GM10248 (cell line): ENCODE measurements at regions of chr1 and their contacts with region 1.

Region 1: GRCh38 chr1:37514350-37515184 is at the start of gene MEAF6:
- DNase-seq: peak; percentile 94
- CTCF ChIP-seq: peak; percentile 64

Region 2: GRCh38 chr1:37474046-37474759 is 40.4 kb before region 1 on chr1 and contains the start of gene ZC3H12A:
- CTCF ChIA-PET with region 1: interaction called, 23 read pairs
- POLR2A ChIA-PET with region 1: interaction called, 11 read pairs
- DNase-seq: peak; percentile 99
- CTCF ChIP-seq: no peak

Region 3: DNA sequence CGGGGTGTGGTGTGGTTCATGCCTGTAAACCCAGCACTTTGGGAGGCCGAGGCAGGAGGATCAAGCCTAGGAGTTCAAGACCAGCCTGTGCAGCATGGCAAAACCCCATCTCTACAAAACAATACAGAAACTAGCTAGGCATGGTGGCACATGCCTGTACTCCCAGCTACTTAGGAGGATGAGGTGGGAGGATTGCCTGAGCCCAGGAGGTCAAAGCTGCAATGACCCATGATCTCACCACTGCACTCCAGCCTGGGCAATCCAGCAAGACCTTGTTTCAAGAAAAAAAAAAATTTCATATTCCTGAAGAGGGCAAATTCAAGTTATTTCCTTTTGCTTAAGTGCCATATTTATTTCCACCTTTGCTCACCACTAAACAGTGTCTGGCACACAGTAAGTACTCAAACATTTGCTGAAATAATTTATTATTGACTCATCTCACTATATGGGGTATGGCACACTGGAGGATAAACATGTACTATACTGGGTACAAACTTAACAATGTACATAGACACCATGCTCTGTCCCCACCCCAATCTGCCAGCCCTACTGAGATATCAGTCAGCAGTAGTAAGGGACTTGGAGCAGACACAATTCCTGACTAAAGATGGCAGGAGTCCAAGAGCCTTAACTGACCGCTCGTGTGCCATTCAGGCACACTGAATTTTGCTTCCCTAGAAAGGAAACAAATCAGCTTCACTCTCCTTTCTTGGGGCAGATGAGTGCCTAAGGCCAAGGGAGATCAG is 15.5 kb before region 1 on chr1:
- CTCF ChIA-PET with region 1: interaction called, 42 read pairs
- POLR2A ChIA-PET with region 1: no interaction called
- DNase-seq: no peak
- CTCF ChIP-seq: no peak

Region 4: GRCh38 chr1:37549341-37549740 is 34.8 kb after region 1 on chr1:
- CTCF ChIA-PET with region 1: interaction called, 12 read pairs
- POLR2A ChIA-PET with region 1: interaction called, 5 read pairs
- DNase-seq: no peak
- CTCF ChIP-seq: no peak